GM12878 (cell line): ENCODE measurements at regions of chr6 and their contacts with region 1.

Region 1: GRCh38 chr6:25278914-25279747 is at the start of gene CARMIL1:
- DNase-seq: no peak
- ATAC-seq: peak; percentile 88
- H3K4me3 ChIP-seq: peak within 1 kb of the TSS; percentile 92
- H3K27ac ChIP-seq: peak within 1 kb of the TSS; percentile 50
- H3K4me1 ChIP-seq: 0 out of 2 replicates have a peak, but pooled peaks cover 5% of the 10 kb centered on the region
- H3K27me3 ChIP-seq: no peaks in the 10 kb centered on the region
- CTCF ChIP-seq: peak; percentile 64 to 81 (median 75)
- EP300 ChIP-seq: no peak
- POLR2A ChIP-seq: no peak
- RAD21 ChIP-seq: peak; percentile 79
- polyA plus RNA-seq, gene CARMIL1: 9.4 to 11.3 TPM

Region 2: DNA sequence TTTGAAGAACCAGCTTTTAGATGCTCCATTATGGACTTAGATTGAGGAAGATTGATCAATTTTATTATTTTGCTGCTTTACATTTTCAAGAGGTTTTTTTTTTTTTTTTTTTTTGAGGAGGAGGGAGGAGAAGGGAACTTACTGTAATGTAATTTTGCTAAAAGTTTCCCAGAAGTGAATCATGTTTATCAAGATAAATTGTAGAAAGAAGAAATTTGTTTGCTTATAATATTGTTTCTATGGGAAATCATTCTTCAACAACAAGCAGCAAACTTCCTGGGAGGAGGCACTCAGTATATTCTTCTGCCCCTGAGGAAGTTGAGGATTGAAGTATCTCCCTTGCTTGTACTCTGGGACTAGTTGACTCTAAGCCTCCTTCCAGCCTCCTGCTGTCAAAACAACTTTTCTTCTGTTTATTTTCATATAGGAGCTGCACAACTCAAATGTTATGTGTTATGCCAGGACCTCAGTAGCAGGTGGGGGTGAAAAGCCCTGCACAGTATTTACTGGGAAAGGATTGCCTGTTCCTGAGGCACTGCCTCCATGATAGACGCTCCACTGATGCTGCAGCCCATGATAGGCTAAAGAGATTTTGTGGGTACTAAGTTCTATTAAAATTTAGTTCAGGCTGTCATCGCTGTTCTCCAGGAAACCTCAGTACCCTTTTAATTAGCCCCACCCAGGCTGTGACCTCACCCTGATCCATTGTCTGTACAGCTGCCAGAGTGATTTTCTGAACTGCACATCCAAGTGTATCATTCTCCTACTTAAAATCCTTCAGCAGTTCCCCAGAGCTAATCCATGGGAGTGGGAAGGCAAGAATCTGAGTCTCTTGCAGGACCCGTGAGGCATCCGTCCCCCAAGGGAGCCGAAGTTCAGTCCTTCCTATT is 51.9 kb after region 1 on chr6:
- CTCF ChIA-PET with region 1: interaction called, 6 read pairs
- POLR2A ChIA-PET with region 1: interaction called, 6 read pairs
- RAD21 ChIA-PET with region 1: interaction called, 11 read pairs
- SMC1A ChIA-PET with region 1: interaction called, 15 read pairs
- in situ Hi-C with region 1: no loop called
- intact Hi-C with region 1: no loop called
- DNase-seq: no peak
- ATAC-seq: no peak
- H3K4me3 ChIP-seq: no peak overlapping the region
- H3K27ac ChIP-seq: no peak overlapping the region
- H3K4me1 ChIP-seq: peaks cover 7% of the 10 kb centered on the region
- H3K27me3 ChIP-seq: no peaks in the 10 kb centered on the region
- CTCF ChIP-seq: no peak
- EP300 ChIP-seq: no peak
- POLR2A ChIP-seq: no peak
- RAD21 ChIP-seq: no peak

Region 3: DNA sequence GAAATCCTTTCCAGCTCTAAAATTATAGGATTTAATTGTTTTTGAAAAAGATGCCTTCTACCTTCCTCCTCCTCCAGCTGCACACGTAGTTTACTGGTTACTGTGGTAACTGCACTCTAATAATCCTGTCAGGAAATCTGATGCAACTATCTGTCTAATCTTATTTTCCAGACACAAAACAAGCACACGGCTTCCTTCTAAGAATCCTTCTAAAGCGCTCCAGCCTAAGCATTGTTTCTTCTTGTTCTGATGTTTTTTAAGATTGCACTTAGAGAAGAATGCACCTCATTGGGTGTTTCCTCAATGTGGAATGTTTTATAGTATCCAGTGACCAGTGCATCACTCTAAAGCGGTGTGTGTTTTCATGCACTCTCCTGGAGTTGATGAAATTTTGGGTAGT is 63.7 kb after region 1 on chr6:
- CTCF ChIA-PET with region 1: no interaction called
- POLR2A ChIA-PET with region 1: no interaction called
- RAD21 ChIA-PET with region 1: interaction called, 15 read pairs
- SMC1A ChIA-PET with region 1: interaction called, 3 read pairs
- in situ Hi-C with region 1: no loop called
- intact Hi-C with region 1: no loop called
- DNase-seq: no peak
- ATAC-seq: no peak
- H3K4me3 ChIP-seq: no peak overlapping the region
- H3K27ac ChIP-seq: no peak overlapping the region
- H3K4me1 ChIP-seq: peaks cover 9% of the 10 kb centered on the region
- H3K27me3 ChIP-seq: 0 out of 4 replicates have a peak, but pooled peaks cover 0 to 2% of the 10 kb centered on the region in 2 experiments
- CTCF ChIP-seq: no peak
- EP300 ChIP-seq: no peak
- POLR2A ChIP-seq: no peak
- RAD21 ChIP-seq: no peak

Region 4: DNA sequence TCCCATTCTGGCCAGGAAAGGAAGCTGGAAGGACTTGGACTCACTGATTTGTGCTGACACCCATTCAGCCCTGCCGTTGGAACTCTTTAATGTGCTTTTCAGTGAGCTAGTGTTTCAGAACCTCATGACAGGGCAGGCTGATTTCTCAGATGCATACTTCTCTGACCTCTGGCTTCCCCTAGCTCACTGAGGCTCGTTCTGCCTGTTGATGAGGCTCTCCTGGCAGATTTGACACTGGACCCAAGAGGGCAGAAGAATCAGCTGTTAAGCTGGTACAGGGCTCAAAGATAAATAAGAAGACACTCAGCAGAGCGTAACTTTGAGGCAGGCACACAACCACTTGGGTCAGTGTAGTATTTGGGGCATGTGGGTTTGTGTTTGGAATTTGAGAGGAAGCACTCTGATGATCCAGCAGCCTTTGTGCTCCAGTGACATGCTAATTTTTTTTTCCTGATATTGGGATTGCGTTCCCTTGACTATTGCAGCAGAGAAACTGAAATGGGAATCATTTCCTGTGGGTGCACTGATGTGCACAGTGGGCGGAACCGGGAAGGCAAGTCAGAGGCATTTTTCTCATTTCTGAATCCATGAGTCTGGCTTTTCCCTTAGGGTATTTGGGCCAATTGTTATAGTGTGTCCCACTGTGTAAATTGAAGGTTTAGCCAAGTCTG is 80.2 kb after region 1 on chr6:
- CTCF ChIA-PET with region 1: interaction called, 5 read pairs
- POLR2A ChIA-PET with region 1: no interaction called
- RAD21 ChIA-PET with region 1: interaction called, 56 read pairs
- SMC1A ChIA-PET with region 1: interaction called, 17 read pairs
- in situ Hi-C with region 1: no loop called
- intact Hi-C with region 1: no loop called
- DNase-seq: no peak
- ATAC-seq: no peak; the same call in 2 of the 3 replicates
- H3K4me3 ChIP-seq: no peak overlapping the region
- H3K27ac ChIP-seq: no peak overlapping the region
- H3K4me1 ChIP-seq: no peaks in the 10 kb centered on the region
- H3K27me3 ChIP-seq: no peaks in the 10 kb centered on the region
- CTCF ChIP-seq: no peak
- EP300 ChIP-seq: no peak
- POLR2A ChIP-seq: no peak
- RAD21 ChIP-seq: no peak

Region 5: DNA sequence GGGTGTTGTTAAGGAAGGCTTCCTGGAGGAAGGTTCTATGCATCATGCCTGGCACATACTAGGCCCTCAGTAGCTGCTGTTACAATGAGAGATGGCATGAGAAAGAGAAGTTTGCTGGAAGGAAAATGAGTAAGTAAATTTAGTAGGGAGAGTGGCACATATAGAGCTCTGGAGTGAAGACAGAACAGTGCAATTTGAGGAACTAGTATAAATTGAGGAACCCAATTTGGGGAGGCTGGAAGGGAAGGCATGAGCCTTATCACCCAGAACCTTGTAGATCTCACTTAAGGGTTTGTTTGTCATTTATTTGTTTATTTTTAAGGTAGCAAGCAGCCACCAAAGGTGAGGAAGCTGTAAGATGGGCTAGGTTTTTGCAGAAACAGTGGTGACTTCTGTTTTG is 285.8 kb after region 1 on chr6:
- CTCF ChIA-PET with region 1: interaction called, 18 read pairs
- POLR2A ChIA-PET with region 1: interaction called, 7 read pairs
- RAD21 ChIA-PET with region 1: no interaction called
- SMC1A ChIA-PET with region 1: no interaction called
- in situ Hi-C with region 1: no loop called
- intact Hi-C with region 1: no loop called
- DNase-seq: no peak
- ATAC-seq: no peak
- H3K4me3 ChIP-seq: no peak overlapping the region
- H3K27ac ChIP-seq: no peak overlapping the region
- H3K4me1 ChIP-seq: no peaks in the 10 kb centered on the region
- H3K27me3 ChIP-seq: no peaks in the 10 kb centered on the region
- CTCF ChIP-seq: no peak
- EP300 ChIP-seq: no peak
- POLR2A ChIP-seq: no peak
- RAD21 ChIP-seq: no peak